GM13977 (cell line): ENCODE measurements at regions of chr1 and their contacts with region 1.

Region 1: GRCh38 chr1:95084317-95085176 is 11.8 kb upstream of the ALG14 start:
- DNase-seq: peak; percentile 74
- CTCF ChIP-seq: peak; percentile 79

Region 2: GRCh38 chr1:94962409-94963265 is 121.9 kb before region 1 on chr1:
- in situ Hi-C with region 1: no loop called
- DNase-seq: peak; percentile 43
- CTCF ChIP-seq: no peak

Region 3: DNA sequence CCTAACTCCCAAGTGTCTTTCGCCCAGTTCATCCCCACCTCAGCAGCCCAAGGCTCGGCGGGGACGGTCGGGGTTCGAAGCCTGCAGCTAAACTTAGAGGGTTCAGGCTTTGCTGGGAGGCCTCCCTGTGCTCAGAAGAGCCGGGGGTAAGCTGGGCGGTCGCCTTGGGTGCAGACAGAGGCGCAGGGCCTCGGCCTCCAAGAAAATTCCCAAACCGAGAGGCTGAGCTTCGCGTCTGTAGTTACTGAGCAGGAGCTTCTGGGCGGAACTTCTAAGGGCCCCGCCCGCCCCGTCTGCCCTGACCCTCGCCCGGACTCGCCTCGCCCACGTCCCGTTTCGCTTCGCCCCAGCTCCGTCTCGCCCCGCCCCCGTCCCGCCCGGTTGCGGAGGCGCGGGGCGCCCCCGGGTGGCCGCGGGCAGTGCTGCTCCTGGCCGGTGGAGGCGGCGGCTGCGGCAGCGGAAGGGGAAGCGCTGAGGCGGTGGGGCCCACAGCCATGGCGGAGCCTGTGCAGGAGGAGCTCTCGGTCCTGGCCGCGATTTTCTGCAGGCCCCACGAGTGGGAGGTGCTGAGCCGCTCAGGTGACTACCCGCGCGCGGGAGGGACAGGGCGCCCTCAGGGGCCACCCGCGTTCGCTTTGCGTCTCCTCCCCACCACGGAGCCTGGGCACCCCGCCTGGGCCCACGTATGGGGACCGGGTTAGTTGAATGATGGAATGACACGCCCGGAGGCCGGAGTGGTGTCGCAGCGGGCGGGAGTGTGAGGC is 149.4 kb after region 1 on chr1 and contains the start of gene RWDD3:
- in situ Hi-C with region 1: loop called (anchors 10 kb)
- DNase-seq: peak; percentile 95
- CTCF ChIP-seq: peak; percentile 97